ENCODE measurements at regions of chr4 and their contacts with region 1.

Region 1: DNA sequence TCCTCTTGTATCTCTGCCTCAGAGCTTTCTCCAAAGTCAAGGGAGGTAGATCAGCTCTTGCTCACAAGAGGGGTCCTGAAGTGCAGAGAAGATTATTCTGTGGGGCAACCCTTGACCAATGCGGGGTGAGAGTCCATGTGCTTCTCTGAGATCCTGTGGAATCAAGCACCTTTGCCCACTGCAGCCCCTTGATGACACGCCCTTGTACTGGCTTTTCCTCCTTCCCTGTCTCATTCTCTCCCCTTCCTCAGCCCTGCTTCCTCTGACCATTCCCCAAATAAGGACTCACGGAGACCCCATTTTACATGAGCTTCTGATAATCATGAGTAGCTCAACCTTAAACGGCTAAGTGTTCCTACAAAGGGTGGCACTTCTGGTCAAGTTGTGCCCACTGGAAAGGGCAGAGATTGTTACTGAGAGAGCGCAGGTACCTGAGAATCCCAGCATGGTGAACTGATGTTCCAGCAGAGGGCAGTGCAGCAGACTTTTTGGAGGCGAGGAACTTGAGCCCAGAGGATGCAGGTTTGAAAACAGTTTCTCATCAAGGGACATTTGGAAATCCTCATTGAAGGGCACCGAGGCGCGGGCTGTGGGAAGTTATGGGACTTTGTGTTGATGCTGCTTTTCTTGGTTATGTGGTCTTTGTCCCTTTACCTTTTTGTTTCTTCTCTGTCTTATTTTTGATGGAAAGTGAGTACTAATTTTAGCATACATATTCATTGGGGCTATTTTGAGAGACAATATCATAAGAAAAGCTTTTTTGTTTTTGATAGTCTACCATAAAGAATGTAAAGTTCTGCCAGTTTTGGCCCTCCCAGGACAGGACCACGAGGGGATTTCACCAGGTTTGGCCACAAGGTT is 201.3 kb downstream of the RBM46 start:
- DNase-seq: peak; percentile 15
- ATAC-seq: peak; percentile 86
- H3K4me3 ChIP-seq: no peak overlapping the region
- H3K27ac ChIP-seq: no peak overlapping the region
- H3K4me1 ChIP-seq: no peaks in the 10 kb centered on the region
- H3K27me3 ChIP-seq: no peaks in the 10 kb centered on the region
- CTCF ChIP-seq: peak; percentile 72 to 73 (median 72)
- EP300 ChIP-seq: no peak
- POLR2A ChIP-seq: no peak
- RAD21 ChIP-seq: peak; percentile 71

Region 2: GRCh38 chr4:154578919-154579318 is 403.5 kb before region 1 on chr4:
- CTCF ChIA-PET with region 1: no interaction called
- POLR2A ChIA-PET with region 1: no interaction called
- RAD21 ChIA-PET with region 1: no interaction called
- SMC1A ChIA-PET with region 1: no interaction called
- in situ Hi-C with region 1: no loop called
- intact Hi-C with region 1: no loop called
- DNase-seq: no peak
- ATAC-seq: no peak
- H3K4me3 ChIP-seq: no peak overlapping the region
- H3K27ac ChIP-seq: no peak overlapping the region
- H3K4me1 ChIP-seq: no peaks in the 10 kb centered on the region
- H3K27me3 ChIP-seq: no peaks in the 10 kb centered on the region
- CTCF ChIP-seq: no peak
- EP300 ChIP-seq: no peak
- POLR2A ChIP-seq: no peak
- RAD21 ChIP-seq: no peak

Region 3: DNA sequence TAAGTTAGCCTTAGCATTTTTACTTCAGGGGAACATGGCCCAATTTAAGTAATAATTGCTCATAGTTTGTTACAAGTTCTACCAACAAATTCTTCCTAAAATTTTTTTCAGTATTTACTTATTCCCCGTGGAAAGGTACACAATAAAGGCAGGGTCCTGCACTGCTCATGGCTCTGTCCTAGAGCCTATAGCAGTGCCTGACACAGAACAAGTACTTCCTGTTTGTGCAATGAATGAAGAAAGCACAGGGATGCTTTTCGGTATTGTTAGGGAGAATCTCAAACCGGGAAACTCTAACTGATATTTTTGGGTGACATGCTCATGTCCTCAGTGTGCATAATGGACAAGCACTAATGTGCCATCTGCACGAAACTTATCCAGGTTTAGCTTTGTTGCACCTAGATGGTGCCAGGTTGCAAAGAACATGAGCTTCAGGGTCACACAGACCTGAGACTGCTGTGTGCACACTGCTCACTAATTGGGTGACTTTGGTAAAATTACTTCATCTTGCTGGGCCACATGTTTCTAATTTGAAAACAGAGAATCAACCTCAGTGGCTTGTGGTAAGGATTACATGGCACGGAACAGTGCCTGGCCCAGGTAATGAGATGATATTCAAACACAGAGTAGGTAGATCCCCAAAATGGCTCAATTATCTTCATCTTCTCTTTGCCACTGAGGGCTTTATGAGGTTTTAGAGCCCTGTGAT is 50.3 kb after region 1 on chr4:
- CTCF ChIA-PET with region 1: no interaction called
- POLR2A ChIA-PET with region 1: no interaction called
- RAD21 ChIA-PET with region 1: no interaction called
- SMC1A ChIA-PET with region 1: no interaction called
- in situ Hi-C with region 1: no loop called
- intact Hi-C with region 1: loop called (anchors 2 kb)
- DNase-seq: peak; percentile 63
- ATAC-seq: peak; percentile 98
- H3K4me3 ChIP-seq: no peak overlapping the region
- H3K27ac ChIP-seq: no peak overlapping the region
- H3K4me1 ChIP-seq: no peaks in the 10 kb centered on the region
- H3K27me3 ChIP-seq: no peaks in the 10 kb centered on the region; a peak in 1 of 4 replicates
- CTCF ChIP-seq: no peak; a peak in 1 of 6 replicates
- EP300 ChIP-seq: peak; percentile 74 to 86; a peak in 3 of 4 replicates
- POLR2A ChIP-seq: no peak
- RAD21 ChIP-seq: no peak